ENCODE measurements at regions of chr2 and their contacts with region 1.

Region 1: DNA sequence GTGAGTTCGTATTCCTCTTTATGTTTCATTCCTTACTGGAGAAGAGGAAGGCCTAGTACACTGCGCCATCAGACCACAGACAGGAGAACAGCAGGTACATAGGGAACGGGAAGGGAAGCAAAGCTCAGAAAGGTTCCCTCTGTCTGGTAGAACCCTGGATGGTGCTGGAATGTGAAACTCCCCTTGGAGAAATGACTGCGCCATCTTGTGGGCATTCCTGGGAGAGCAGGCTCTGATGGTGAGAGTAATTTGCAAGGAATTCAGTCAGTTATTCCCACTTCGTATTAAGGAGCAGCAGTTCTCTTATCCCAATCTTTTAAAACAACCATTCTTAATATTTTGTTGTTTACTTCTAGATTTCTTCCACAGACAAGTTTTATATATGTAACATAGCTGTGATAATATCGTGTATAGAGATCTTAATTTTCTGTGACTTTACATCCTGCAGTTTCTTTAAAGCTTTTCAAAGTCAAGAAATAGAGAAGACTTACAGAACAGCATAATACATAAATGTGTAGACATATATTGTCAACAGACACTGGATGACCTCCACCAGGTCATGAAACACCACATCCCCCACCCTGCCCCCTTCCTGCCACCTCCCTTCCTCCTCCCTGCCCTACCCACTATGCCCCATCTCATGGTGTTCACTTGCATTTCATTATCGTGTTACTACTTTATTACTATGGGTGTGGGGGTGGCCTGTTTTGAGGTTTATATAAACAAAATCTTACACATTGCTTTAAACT is 83.9 kb downstream of the ARHGEF4 start:
- DNase-seq: peak; percentile 87
- ATAC-seq: peak; percentile 88
- H3K4me3 ChIP-seq: no peak overlapping the region
- H3K27ac ChIP-seq: no peak overlapping the region
- H3K4me1 ChIP-seq: no peaks in the 10 kb centered on the region
- H3K27me3 ChIP-seq: no peaks in the 10 kb centered on the region
- CTCF ChIP-seq: peak; percentile 94

Region 2: DNA sequence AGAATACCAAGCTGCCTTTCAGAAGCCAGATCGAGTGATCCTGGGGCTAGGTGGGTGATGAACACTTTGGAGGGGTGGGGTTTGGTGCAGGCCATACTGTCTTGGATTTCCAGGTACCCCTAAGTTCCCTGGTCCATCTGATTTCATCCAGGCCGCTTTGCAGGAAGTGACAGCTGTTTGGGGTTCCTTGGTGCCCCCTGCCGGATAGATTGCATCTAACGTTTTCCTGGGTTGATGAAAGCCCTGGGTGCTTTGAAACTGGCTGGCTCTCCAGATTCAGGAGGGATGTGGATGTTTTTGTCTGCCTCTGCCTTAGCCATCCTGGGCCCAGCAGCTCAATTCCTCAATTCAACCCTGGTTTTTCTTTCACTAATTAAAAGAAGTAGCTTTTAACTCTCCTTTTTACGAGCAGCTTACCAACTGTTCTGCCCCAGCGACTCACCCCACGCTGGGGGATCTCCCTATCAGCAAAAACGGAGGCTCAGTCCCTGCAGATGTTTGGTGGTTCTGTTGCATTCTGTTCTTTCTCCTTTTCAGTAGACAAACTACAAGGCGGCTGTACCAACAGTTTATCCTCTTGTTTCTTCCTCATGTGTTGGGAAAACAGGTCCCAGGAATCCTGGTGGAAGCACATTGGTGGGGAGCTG is 46.8 kb before region 1 on chr2:
- CTCF ChIA-PET with region 1: no interaction called
- POLR2A ChIA-PET with region 1: no interaction called
- intact Hi-C with region 1: loop called (anchors 5 kb)
- DNase-seq: peak; percentile 76
- ATAC-seq: peak; percentile 90
- H3K4me3 ChIP-seq: no peak overlapping the region
- H3K27ac ChIP-seq: no peak overlapping the region
- H3K4me1 ChIP-seq: no peaks in the 10 kb centered on the region
- H3K27me3 ChIP-seq: no peaks in the 10 kb centered on the region
- CTCF ChIP-seq: peak; percentile 80

Region 3: GRCh38 chr2:130884503-130884902 is 36.1 kb before region 1 on chr2:
- CTCF ChIA-PET with region 1: interaction called, 3 read pairs
- POLR2A ChIA-PET with region 1: no interaction called
- intact Hi-C with region 1: loop called (anchors 2 kb)
- DNase-seq: no peak
- ATAC-seq: no peak
- H3K4me3 ChIP-seq: no peak overlapping the region
- H3K27ac ChIP-seq: no peak overlapping the region
- H3K4me1 ChIP-seq: peaks cover 21% of the 10 kb centered on the region
- H3K27me3 ChIP-seq: no peaks in the 10 kb centered on the region
- CTCF ChIP-seq: no peak

Region 4: DNA sequence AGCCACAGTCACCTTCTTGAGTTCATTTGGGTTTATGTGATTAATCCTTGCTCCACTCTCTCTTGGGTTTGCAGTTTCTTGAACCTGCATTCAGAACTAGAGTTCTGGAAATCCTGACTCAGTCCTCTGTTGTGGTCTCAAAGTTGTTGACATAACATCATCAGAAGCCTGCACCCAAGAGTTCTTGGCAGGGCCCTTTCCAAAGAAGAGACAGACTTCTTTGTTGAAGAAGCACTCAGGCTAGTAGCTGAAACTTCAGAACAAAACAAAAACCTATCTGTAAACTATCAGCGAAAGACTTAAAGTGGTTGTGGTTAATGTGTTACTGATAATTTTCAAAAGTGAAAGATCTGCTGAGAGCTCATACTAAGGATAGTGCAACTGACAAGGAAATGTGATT is 51.8 kb after region 1 on chr2:
- CTCF ChIA-PET with region 1: no interaction called
- POLR2A ChIA-PET with region 1: no interaction called
- intact Hi-C with region 1: no loop called
- DNase-seq: peak; percentile 57
- ATAC-seq: peak; percentile 82
- H3K4me3 ChIP-seq: no peak overlapping the region
- H3K27ac ChIP-seq: no peak overlapping the region
- H3K4me1 ChIP-seq: no peaks in the 10 kb centered on the region
- H3K27me3 ChIP-seq: no peaks in the 10 kb centered on the region
- CTCF ChIP-seq: no peak

Measured in PC-3 (cell line).